A549 (cell line): ENCODE measurements at regions of chr5 and their contacts with region 1.

Region 1: GRCh38 chr5:108260117-108260857 is 121.6 kb downstream of the FBXL17 start:
- DNase-seq: peak; percentile 35 to 81
- ATAC-seq: peak; percentile 99 to 100
- H3K4me3 ChIP-seq: no peak overlapping the region
- H3K27ac ChIP-seq: no peak overlapping the region
- H3K4me1 ChIP-seq: no peaks in the 10 kb centered on the region
- CTCF ChIP-seq: peak; percentile 93
- EP300 ChIP-seq: no peak
- POLR2A ChIP-seq: no peak
- RAD21 ChIP-seq: peak; percentile 87 to 88

Region 2: GRCh38 chr5:108074626-108075025 is 185.7 kb before region 1 on chr5:
- CTCF ChIA-PET with region 1: no interaction called
- POLR2A ChIA-PET with region 1: no interaction called
- DNase-seq: no peak
- ATAC-seq: no peak
- H3K4me3 ChIP-seq: no peak overlapping the region
- H3K27ac ChIP-seq: no peak overlapping the region
- H3K4me1 ChIP-seq: no peaks in the 10 kb centered on the region
- CTCF ChIP-seq: no peak
- EP300 ChIP-seq: no peak
- POLR2A ChIP-seq: no peak
- RAD21 ChIP-seq: no peak

Region 3: GRCh38 chr5:108271127-108271526 is 10.8 kb after region 1 on chr5:
- CTCF ChIA-PET with region 1: interaction called, 46 read pairs
- POLR2A ChIA-PET with region 1: no interaction called
- DNase-seq: no peak
- ATAC-seq: no peak
- H3K4me3 ChIP-seq: no peak overlapping the region
- H3K27ac ChIP-seq: no peak overlapping the region
- H3K4me1 ChIP-seq: no peaks in the 10 kb centered on the region
- CTCF ChIP-seq: no peak
- EP300 ChIP-seq: no peak
- POLR2A ChIP-seq: no peak
- RAD21 ChIP-seq: no peak

Region 4: GRCh38 chr5:108345541-108346171 is 85.4 kb after region 1 on chr5:
- CTCF ChIA-PET with region 1: interaction called, 59 read pairs
- POLR2A ChIA-PET with region 1: interaction called, 4 read pairs
- DNase-seq: peak; percentile 2 to 57
- ATAC-seq: peak; percentile 68 to 86; a peak in 4 of 6 replicates
- H3K4me3 ChIP-seq: no peak overlapping the region
- H3K27ac ChIP-seq: no peak overlapping the region
- H3K4me1 ChIP-seq: no peaks in the 10 kb centered on the region
- CTCF ChIP-seq: peak; percentile 67
- EP300 ChIP-seq: no peak
- POLR2A ChIP-seq: no peak
- RAD21 ChIP-seq: peak; percentile 67 to 76

Region 5: DNA sequence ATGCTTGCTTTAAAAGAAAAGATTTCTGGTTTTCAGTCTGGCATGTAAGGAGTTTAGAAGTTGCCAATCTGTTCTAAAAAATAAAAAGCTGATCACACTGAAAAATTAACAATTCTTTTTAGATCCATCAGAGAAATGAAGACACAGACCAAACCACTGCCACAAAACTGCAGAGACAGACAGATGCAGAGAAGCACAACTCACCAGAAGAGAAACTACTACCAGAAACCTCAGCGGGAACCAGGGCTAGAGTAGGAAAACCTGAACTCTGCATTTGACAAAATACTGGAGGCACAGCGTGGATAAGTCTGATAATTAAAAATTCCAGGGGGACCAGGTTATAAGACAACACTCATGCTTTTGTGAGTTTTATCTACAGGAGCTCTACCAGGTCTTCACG is 92.8 kb after region 1 on chr5:
- CTCF ChIA-PET with region 1: interaction called, 20 read pairs
- POLR2A ChIA-PET with region 1: no interaction called
- DNase-seq: no peak
- ATAC-seq: no peak
- H3K4me3 ChIP-seq: no peak overlapping the region
- H3K27ac ChIP-seq: no peak overlapping the region
- H3K4me1 ChIP-seq: no peaks in the 10 kb centered on the region
- CTCF ChIP-seq: no peak
- EP300 ChIP-seq: no peak
- POLR2A ChIP-seq: no peak
- RAD21 ChIP-seq: no peak